ENCODE measurements at regions of chr2 and their contacts with region 1.

Region 1: DNA sequence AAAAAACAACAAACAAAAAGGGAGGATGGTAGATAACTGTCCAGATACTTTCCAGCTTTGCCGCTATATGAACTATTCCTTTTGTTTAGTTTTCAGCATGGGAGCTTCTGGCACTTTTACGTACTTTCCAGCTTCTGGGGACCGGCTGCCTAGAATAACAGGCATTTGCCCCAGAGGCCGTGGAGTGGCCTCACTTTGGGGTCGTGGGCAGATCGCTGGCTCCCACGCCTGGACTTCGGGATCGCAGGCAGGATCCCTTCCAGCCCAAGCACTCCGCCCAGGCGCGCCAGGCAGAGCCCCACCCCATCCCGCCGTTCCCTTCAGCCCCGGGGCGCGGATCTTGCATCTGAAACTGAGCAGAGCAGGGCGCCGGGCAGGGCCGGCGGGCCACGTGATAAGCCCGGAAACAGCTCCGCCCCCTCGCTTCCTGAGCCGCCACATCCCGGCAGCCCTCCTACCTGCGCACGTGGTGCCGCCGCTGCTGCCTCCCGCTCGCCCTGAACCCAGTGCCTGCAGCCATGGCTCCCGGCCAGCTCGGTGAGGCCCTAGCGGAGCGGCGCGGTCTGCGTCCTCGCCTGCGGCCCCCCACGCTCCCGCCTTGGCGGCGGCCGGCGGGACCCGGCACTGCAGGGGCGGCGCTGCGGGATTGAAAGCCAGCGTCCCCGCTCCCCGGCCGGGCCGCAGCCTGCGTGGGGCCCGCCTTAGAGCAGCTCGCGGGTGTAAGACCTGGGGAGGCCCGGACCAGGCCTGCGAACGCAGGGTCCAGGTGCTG is at the start of gene ATIC:
- DNase-seq: peak; percentile 94 to 97
- H3K4me3 ChIP-seq: peak within 1 kb of the TSS; percentile 88
- H3K27ac ChIP-seq: peak within 1 kb of the TSS; percentile 68
- H3K4me1 ChIP-seq: peaks cover 43% of the 10 kb centered on the region
- H3K27me3 ChIP-seq: no peaks in the 10 kb centered on the region
- CTCF ChIP-seq: no peak
- total RNA-seq, gene ATIC: 285 and 290 TPM in 2 replicates

Region 2: GRCh38 chr2:215269397-215270119 is 42.3 kb before region 1 on chr2:
- CTCF ChIA-PET with region 1: interaction called, 4 read pairs
- POLR2A ChIA-PET with region 1: interaction called, 24 read pairs
- intact Hi-C with region 1: no loop called
- DNase-seq: peak; percentile 61 to 77
- H3K4me3 ChIP-seq: no peak overlapping the region
- H3K27ac ChIP-seq: no peak overlapping the region
- H3K4me1 ChIP-seq: no peaks in the 10 kb centered on the region; the same call in 1 of the 2 replicates
- H3K27me3 ChIP-seq: no peaks in the 10 kb centered on the region
- CTCF ChIP-seq: peak; percentile 98

Region 3: GRCh38 chr2:215410932-215411285 is 99.1 kb after region 1 on chr2:
- CTCF ChIA-PET with region 1: interaction called, 3 read pairs
- POLR2A ChIA-PET with region 1: interaction called, 19 read pairs
- intact Hi-C with region 1: loop called (anchors 5 kb)
- DNase-seq: peak; percentile 27 to 98
- H3K4me3 ChIP-seq: peak overlapping the region; percentile 2; the same call in 1 of the 2 replicates
- H3K27ac ChIP-seq: peak overlapping the region; percentile 82
- H3K4me1 ChIP-seq: peaks cover 38% of the 10 kb centered on the region
- H3K27me3 ChIP-seq: no peaks in the 10 kb centered on the region
- CTCF ChIP-seq: no peak

Region 4: DNA sequence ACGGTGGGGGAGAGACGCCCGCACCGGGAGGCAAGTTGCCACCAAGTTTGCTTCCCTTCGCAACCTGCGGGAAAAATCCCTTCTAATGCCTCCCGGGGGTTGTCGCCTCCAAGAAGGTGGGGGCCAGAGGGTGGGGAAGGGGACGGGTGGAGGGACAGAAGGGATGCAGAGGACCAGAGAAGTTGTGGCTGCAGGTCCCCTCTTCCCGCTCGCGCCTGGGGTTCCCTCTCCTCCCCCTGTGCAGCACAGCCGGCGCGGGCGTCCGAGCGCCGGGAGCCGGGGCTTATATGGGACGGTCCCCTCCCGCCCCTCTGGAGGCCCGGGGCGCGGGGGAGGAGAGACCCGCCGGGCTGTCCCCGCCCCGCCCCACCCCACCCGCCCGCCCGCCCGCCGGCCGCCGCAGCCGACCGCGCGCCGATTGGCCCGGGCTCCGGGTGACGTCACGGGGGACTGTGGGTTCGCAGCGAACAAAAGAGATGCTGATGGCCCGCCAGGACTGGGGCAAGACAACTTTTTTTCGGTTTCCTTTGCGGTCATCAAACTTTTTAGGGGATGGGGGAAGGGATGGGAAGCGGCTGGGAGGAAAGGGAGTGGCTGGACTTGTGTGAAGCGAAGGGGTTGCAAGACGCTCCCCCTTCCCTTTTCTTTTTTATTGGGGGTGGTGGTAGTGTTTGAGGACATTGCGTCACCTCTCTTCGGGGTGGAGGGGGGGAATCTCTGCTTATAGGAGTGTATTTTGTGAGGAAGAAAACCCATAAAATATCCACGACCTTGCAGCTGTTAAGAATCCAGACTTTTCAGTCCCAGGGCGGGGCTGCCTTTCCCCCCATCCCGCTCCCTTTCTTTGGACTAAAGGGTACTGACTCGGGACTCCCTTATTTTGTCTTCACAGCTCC is 124.2 kb after region 1 on chr2 and contains the start of gene FN1:
- CTCF ChIA-PET with region 1: no interaction called
- POLR2A ChIA-PET with region 1: interaction called, 34 read pairs
- intact Hi-C with region 1: loop called (anchors 2 kb)
- DNase-seq: peak in 1 of 2 experiments; percentile 74
- H3K4me3 ChIP-seq: peak within 1 kb of the TSS; percentile 70
- H3K27ac ChIP-seq: no peak within 1 kb of the TSS
- H3K4me1 ChIP-seq: peaks cover 15% of the 10 kb centered on the region
- H3K27me3 ChIP-seq: no peaks in the 10 kb centered on the region
- CTCF ChIP-seq: no peak
- total RNA-seq, gene FN1: 39.4 and 42.5 TPM in 2 replicates

Region 5: GRCh38 chr2:216287251-216287650 is 975.4 kb after region 1 on chr2:
- CTCF ChIA-PET with region 1: no interaction called
- POLR2A ChIA-PET with region 1: no interaction called
- intact Hi-C with region 1: no loop called
- DNase-seq: no peak
- H3K4me3 ChIP-seq: no peak overlapping the region
- H3K27ac ChIP-seq: no peak overlapping the region
- H3K4me1 ChIP-seq: no peaks in the 10 kb centered on the region
- H3K27me3 ChIP-seq: no peaks in the 10 kb centered on the region
- CTCF ChIP-seq: no peak

Region 6: GRCh38 chr2:216730871-216731270 is 1419.1 kb after region 1 on chr2:
- CTCF ChIA-PET with region 1: no interaction called
- POLR2A ChIA-PET with region 1: interaction called, 14 read pairs
- intact Hi-C with region 1: no loop called
- DNase-seq: no peak
- H3K4me3 ChIP-seq: no peak overlapping the region
- H3K27ac ChIP-seq: no peak overlapping the region
- H3K4me1 ChIP-seq: no peaks in the 10 kb centered on the region
- H3K27me3 ChIP-seq: peaks cover 6% of the 10 kb centered on the region; the same call in 1 of the 2 replicates
- CTCF ChIP-seq: no peak